GM12878 (cell line): ENCODE measurements at regions of chr7 and their contacts with region 1.

Region 1: GRCh38 chr7:120402079-120402767 is 129.2 kb downstream of the KCND2 start:
- DNase-seq: no peak
- ATAC-seq: peak; percentile 54
- H3K4me3 ChIP-seq: peak overlapping the region; percentile 58
- H3K27ac ChIP-seq: peak overlapping the region; percentile 95
- H3K4me1 ChIP-seq: peaks cover 47% of the 10 kb centered on the region
- H3K27me3 ChIP-seq: no peaks in the 10 kb centered on the region
- CTCF ChIP-seq: no peak
- EP300 ChIP-seq: peak; percentile 76 to 92; a peak in 3 of 4 replicates
- POLR2A ChIP-seq: no peak
- RAD21 ChIP-seq: no peak

Region 2: GRCh38 chr7:120138497-120138896 is 263.7 kb before region 1 on chr7:
- CTCF ChIA-PET with region 1: no interaction called
- POLR2A ChIA-PET with region 1: no interaction called
- RAD21 ChIA-PET with region 1: no interaction called
- SMC1A ChIA-PET with region 1: no interaction called
- in situ Hi-C with region 1: no loop called
- intact Hi-C with region 1: no loop called
- DNase-seq: no peak
- ATAC-seq: no peak
- H3K4me3 ChIP-seq: no peak overlapping the region
- H3K27ac ChIP-seq: no peak overlapping the region
- H3K4me1 ChIP-seq: no peaks in the 10 kb centered on the region
- H3K27me3 ChIP-seq: no peaks in the 10 kb centered on the region
- CTCF ChIP-seq: no peak
- EP300 ChIP-seq: no peak
- POLR2A ChIP-seq: no peak
- RAD21 ChIP-seq: no peak

Region 3: DNA sequence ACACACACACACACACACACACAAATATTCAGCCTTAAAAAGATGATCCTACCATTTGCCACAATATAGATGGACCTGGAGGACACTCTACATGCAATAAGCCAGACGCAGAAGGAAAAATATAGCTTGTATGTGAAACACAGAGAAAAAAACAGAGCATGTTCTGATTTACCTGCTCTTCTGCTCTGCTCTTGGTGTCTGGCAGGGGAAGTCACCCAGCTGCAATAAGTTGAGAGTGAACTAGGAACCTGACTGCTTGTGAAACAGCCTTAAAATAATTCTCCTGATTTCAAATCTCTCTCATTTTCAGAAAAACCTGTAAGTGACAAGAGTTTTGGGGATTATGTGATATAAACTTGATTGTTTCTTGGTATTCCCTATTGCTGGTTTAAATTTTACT is 160.2 kb before region 1 on chr7:
- CTCF ChIA-PET with region 1: no interaction called
- POLR2A ChIA-PET with region 1: no interaction called
- RAD21 ChIA-PET with region 1: no interaction called
- SMC1A ChIA-PET with region 1: no interaction called
- in situ Hi-C with region 1: no loop called
- intact Hi-C with region 1: no loop called
- DNase-seq: no peak
- ATAC-seq: no peak
- H3K4me3 ChIP-seq: no peak overlapping the region
- H3K27ac ChIP-seq: no peak overlapping the region
- H3K4me1 ChIP-seq: no peaks in the 10 kb centered on the region
- H3K27me3 ChIP-seq: no peaks in the 10 kb centered on the region; a peak in 1 of 4 replicates
- CTCF ChIP-seq: no peak
- EP300 ChIP-seq: no peak
- POLR2A ChIP-seq: no peak
- RAD21 ChIP-seq: no peak

Region 4: GRCh38 chr7:120280743-120281142 is 121.5 kb before region 1 on chr7:
- CTCF ChIA-PET with region 1: interaction called, 4 read pairs
- POLR2A ChIA-PET with region 1: interaction called, 7 read pairs
- RAD21 ChIA-PET with region 1: interaction called, 15 read pairs
- SMC1A ChIA-PET with region 1: interaction called, 49 read pairs
- in situ Hi-C with region 1: no loop called
- intact Hi-C with region 1: no loop called
- DNase-seq: no peak
- ATAC-seq: no peak
- H3K4me3 ChIP-seq: no peak overlapping the region
- H3K27ac ChIP-seq: no peak overlapping the region
- H3K4me1 ChIP-seq: no peaks in the 10 kb centered on the region
- H3K27me3 ChIP-seq: no peaks in the 10 kb centered on the region
- CTCF ChIP-seq: no peak
- EP300 ChIP-seq: no peak
- POLR2A ChIP-seq: no peak
- RAD21 ChIP-seq: no peak

Region 5: DNA sequence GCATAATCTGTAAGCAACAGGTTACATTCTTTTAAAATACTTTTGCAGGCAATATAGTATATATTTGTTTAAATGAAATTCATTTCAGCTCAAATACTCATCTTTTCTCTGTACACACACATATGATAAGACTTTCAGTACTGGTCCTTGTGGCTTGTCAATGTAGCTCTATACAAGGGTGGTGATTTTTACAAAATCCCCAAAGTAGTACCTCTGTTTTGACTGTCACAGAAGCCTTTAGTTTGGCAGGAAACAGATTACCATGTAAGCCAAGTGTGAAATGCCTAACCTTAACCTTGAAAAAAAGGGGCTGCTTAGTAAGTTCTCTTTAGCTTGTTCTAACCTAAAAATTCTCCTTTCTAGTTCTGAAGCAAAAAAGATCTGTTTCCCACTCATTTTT is 41.3 kb before region 1 on chr7:
- CTCF ChIA-PET with region 1: interaction called, 4 read pairs
- POLR2A ChIA-PET with region 1: interaction called, 9 read pairs
- RAD21 ChIA-PET with region 1: interaction called, 35 read pairs
- SMC1A ChIA-PET with region 1: interaction called, 32 read pairs
- in situ Hi-C with region 1: no loop called
- intact Hi-C with region 1: loop called (anchors 5 kb)
- DNase-seq: peak; percentile 61
- ATAC-seq: peak; percentile 97
- H3K4me3 ChIP-seq: no peak overlapping the region
- H3K27ac ChIP-seq: peak overlapping the region; percentile 50
- H3K4me1 ChIP-seq: peaks cover 9% of the 10 kb centered on the region
- H3K27me3 ChIP-seq: no peaks in the 10 kb centered on the region
- CTCF ChIP-seq: no peak
- EP300 ChIP-seq: peak in 1 of 2 experiments; percentile 41; a peak in 1 of 4 replicates
- POLR2A ChIP-seq: no peak
- RAD21 ChIP-seq: 0 out of 2 replicates have a peak, but pooled peaks have one; percentile 6

Region 6: GRCh38 chr7:120421151-120421651 is 19.0 kb after region 1 on chr7:
- CTCF ChIA-PET with region 1: interaction called, 11 read pairs
- POLR2A ChIA-PET with region 1: interaction called, 25 read pairs
- RAD21 ChIA-PET with region 1: interaction called, 30 read pairs
- SMC1A ChIA-PET with region 1: interaction called, 305 read pairs
- in situ Hi-C with region 1: no loop called
- intact Hi-C with region 1: loop called (anchors 1 kb)
- DNase-seq: peak; percentile 91
- ATAC-seq: peak; percentile 91
- H3K4me3 ChIP-seq: no peak overlapping the region; the same call in 1 of the 2 replicates
- H3K27ac ChIP-seq: peak overlapping the region; percentile 69
- H3K4me1 ChIP-seq: peaks cover 27% of the 10 kb centered on the region
- H3K27me3 ChIP-seq: no peaks in the 10 kb centered on the region
- CTCF ChIP-seq: no peak
- EP300 ChIP-seq: peak; percentile 91 to 98
- POLR2A ChIP-seq: no peak
- RAD21 ChIP-seq: no peak; the same call in 1 of the 2 replicates

Region 7: GRCh38 chr7:120472892-120473291 is 70.7 kb after region 1 on chr7:
- CTCF ChIA-PET with region 1: no interaction called
- POLR2A ChIA-PET with region 1: interaction called, 3 read pairs
- RAD21 ChIA-PET with region 1: interaction called, 4 read pairs
- SMC1A ChIA-PET with region 1: interaction called, 13 read pairs
- in situ Hi-C with region 1: no loop called
- intact Hi-C with region 1: no loop called
- DNase-seq: no peak
- ATAC-seq: no peak
- H3K4me3 ChIP-seq: no peak overlapping the region
- H3K27ac ChIP-seq: no peak overlapping the region
- H3K4me1 ChIP-seq: peaks cover 3% of the 10 kb centered on the region
- H3K27me3 ChIP-seq: no peaks in the 10 kb centered on the region
- CTCF ChIP-seq: no peak
- EP300 ChIP-seq: no peak
- POLR2A ChIP-seq: no peak
- RAD21 ChIP-seq: no peak

Region 8: GRCh38 chr7:120950539-120951308 is 548.5 kb after region 1 on chr7 and contains the start of gene ING3:
- CTCF ChIA-PET with region 1: no interaction called
- POLR2A ChIA-PET with region 1: no interaction called
- RAD21 ChIA-PET with region 1: no interaction called
- SMC1A ChIA-PET with region 1: no interaction called
- in situ Hi-C with region 1: no loop called
- intact Hi-C with region 1: loop called (anchors 5 kb)
- DNase-seq: peak; percentile 92
- ATAC-seq: peak; percentile 93
- H3K4me3 ChIP-seq: peak within 1 kb of the TSS; percentile 90
- H3K27ac ChIP-seq: peak within 1 kb of the TSS; percentile 97
- H3K4me1 ChIP-seq: 0 out of 2 replicates have a peak, but pooled peaks cover 5% of the 10 kb centered on the region
- H3K27me3 ChIP-seq: no peaks in the 10 kb centered on the region
- CTCF ChIP-seq: no peak
- EP300 ChIP-seq: 0 out of 4 replicates have a peak, but pooled peaks of 1 of the 2 experiments have one; percentile 15
- POLR2A ChIP-seq: peak; percentile 89
- RAD21 ChIP-seq: no peak
- polyA plus RNA-seq, gene ING3: 44.3 to 60.8 TPM